ENCODE measurements at regions of chr2 and their contacts with region 1.

Region 1: DNA sequence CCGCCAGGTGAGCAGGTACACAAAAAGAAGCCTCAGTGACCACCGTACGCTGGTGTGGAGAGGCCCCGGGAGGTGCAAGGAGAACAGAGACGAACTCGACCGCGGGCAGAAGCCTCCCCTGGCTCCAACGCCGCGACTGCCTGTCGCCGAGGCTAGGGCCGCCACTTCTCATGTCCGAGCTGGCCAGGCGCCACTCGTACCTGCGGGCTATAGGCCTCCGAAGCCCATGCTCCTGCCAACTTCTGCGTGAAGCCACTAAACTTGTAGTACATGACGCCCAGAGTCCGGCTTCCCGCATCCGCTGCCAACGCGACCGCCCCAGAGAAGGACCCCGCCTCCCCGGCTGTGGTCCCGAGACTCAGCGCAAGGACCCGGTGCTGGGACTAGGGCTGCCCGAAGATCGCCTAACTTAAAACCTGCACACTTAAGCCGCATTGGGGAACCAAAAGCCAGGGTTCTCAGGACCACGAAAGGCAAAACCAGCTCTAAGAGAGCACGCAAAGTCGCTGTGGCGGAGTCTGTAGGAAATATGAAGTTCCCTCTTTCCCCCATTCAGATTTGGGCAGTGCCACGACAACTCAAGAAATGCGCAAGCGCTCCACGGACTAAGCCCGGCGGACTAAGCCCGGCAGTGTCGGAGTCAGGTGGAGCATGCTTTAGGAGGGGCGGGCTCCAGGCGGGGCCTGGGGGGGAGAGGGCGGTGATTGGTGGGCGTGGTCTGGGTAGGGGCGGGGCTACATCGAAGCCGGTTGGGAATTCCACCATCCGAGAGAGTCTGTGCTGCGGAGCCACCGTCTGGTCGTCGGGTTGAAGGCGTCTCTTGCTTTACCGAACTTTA is at the start of gene COX7A2L:
- DNase-seq: peak; percentile 83 to 97
- H3K4me3 ChIP-seq: peak within 1 kb of the TSS; percentile 61 to 97
- H3K27ac ChIP-seq: peak within 1 kb of the TSS; percentile 82 to 95
- H3K4me1 ChIP-seq: peaks cover 0 to 23% of the 10 kb centered on the region in 2 donors
- H3K27me3 ChIP-seq: no peaks in the 10 kb centered on the region
- CTCF ChIP-seq: peak; percentile 3 to 56 (median 36)
- total RNA-seq, gene COX7A2L: 35.2 TPM

Region 2: DNA sequence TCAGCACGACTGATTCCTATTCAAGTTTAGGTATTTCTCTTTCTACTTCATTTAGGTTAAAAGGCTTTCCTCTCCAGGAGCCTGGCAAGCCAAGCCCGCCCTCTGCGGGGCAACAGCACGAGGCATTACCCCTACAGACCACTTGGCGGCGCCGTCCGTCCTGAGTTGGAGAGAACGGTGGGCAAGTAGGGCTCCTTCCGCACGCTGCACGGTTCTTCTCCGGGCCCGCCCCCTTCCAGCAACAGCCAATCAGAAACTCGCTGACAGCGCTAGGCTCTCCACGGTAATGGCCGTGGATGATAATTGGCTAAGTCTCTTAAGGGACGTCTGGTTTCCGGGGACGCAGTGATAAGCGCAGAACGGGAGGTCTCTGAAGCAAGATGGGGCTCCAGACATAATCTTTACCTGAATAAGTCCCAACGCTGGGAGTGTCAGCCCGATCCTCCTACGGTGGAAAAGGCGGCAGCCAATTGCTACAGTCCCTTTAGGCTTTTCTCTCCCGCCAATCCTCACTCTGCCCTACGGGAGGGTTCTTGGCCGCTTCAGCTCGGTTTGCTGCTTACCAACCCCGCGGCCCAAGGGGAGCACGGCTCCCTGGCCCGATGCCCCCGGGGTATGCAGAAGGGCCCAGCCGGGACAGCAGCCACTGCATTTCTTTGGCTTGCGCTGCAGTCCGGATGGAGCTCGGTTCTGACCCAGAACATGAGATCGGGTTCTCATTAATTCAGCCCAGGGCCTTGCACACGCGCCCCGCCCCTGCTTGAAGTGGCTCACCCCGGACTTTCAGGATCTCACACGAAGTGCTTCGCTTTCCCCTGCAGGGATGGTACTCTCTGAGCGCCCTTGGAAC is 520.2 kb before region 1 on chr2:
- intact Hi-C with region 1: loop called (anchors 2 kb)
- DNase-seq: peak; percentile 79 to 97
- H3K4me3 ChIP-seq: peak overlapping the region; percentile 77 to 91
- H3K27ac ChIP-seq: peak overlapping the region; percentile 54 to 81
- H3K4me1 ChIP-seq: peaks cover 0 to 2% of the 10 kb centered on the region in 2 donors
- H3K27me3 ChIP-seq: no peaks in the 10 kb centered on the region
- CTCF ChIP-seq: peak; percentile 93 to 95 (median 94)

Region 3: DNA sequence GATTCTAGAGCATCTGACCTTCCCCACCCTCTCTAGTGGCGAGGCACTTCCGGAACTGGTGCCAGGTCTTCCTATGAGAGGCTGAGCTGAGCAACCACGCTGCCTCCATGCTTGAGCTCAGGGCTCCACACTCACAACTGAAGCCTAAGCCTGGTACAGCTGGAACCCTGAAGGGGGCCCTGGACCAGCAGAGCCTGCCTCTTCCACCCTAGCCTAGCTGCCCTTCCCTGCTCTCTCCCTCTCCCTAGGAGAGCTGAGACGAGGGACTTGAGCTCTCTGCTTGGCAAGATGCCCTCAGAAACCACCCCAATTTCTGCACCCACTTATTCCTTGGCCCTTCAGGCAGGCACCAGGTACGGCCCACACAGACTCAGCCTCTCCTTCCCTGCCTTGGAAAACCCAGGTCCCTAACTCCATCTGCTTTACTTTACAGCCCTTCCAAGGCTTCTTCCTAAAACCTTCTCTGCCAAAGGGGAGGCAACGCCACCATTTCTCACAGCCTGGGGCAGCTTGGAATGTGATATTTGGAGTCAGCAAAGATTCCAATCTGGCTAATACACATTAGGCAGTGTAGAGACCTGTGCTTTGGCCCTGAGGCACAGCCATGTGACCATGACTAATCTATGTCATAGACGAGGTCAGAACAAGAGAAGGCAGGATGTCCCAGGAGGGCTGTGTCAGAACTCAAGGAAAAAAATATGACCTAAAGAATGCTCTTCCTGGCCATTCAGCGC is 18.9 kb before region 1 on chr2:
- intact Hi-C with region 1: loop called (anchors 1 kb)
- DNase-seq: peak; percentile 56 to 88
- H3K4me3 ChIP-seq: peak overlapping the region in 1 of 2 donors; percentile 5
- H3K27ac ChIP-seq: peak overlapping the region; percentile 70 to 72
- H3K4me1 ChIP-seq: peaks cover 7 to 15% of the 10 kb centered on the region in 2 donors
- H3K27me3 ChIP-seq: no peaks in the 10 kb centered on the region
- CTCF ChIP-seq: no peak

Measured in ascending aorta (tissue), 2 donors.